ENCODE measurements at regions of chr5 and their contacts with region 1.

Region 1: GRCh38 chr5:132456296-132457001 is 34.1 kb downstream of the IRF1 start:
- DNase-seq: peak; percentile 76 to 87 (median 79)
- H3K4me3 ChIP-seq: peak overlapping the region; percentile 41 to 48
- H3K4me3 Mint-ChIP-seq: peak overlapping the region; percentile 73 to 89 (median 82)
- H3K27ac ChIP-seq: peak overlapping the region; percentile 77
- H3K27ac Mint-ChIP-seq: peak overlapping the region; percentile 97 to 100 (median 100)
- H3K4me1 ChIP-seq: peaks cover 100% of the 10 kb centered on the region
- H3K4me1 Mint-ChIP-seq: peaks cover 82 to 95% (median 90%) of the 10 kb centered on the region in 4 donors
- H3K27me3 ChIP-seq: no peaks in the 10 kb centered on the region
- H3K27me3 Mint-ChIP-seq: no peaks in the 10 kb centered on the region

Region 2: DNA sequence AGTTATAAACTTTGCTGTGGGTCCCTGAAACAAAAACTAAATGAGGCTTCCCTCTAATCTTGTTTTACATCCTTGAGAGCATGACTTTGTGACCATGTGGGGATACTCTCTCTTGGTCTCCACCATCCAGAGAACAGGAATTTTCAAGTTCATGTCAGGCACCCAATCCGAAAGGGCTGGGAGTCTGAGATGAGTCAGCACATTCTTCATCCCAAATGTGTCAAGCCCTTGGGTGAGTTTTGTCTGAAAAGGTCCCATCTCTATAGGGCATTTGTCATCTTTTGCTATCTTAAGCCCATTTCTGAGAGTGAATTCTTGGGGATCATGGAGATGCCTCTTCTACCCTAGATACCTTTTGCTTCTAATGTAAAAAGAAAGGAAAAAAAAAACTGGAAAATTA is 794.5 kb before region 1 on chr5:
- CTCF ChIA-PET with region 1: no interaction called
- POLR2A ChIA-PET with region 1: no interaction called
- intact Hi-C with region 1: no loop called
- DNase-seq: no peak
- H3K4me3 ChIP-seq: no peak overlapping the region
- H3K4me3 Mint-ChIP-seq: no peak overlapping the region
- H3K27ac ChIP-seq: no peak overlapping the region
- H3K27ac Mint-ChIP-seq: no peak overlapping the region
- H3K4me1 ChIP-seq: no peaks in the 10 kb centered on the region
- H3K4me1 Mint-ChIP-seq: peaks cover 0 to 8% (median 0%) of the 10 kb centered on the region in 4 donors
- H3K27me3 ChIP-seq: no peaks in the 10 kb centered on the region
- H3K27me3 Mint-ChIP-seq: no peaks in the 10 kb centered on the region

Region 3: GRCh38 chr5:132419502-132420468 is 36.7 kb before region 1 on chr5:
- CTCF ChIA-PET with region 1: interaction called, 100 read pairs
- POLR2A ChIA-PET with region 1: interaction called, 378 read pairs
- intact Hi-C with region 1: loop called (anchors 5 kb)
- DNase-seq: peak; percentile 57 to 69 (median 64)
- H3K4me3 ChIP-seq: peak overlapping the region; percentile 38 to 51
- H3K4me3 Mint-ChIP-seq: peak overlapping the region; percentile 75 to 93 (median 80)
- H3K27ac ChIP-seq: peak overlapping the region; percentile 71
- H3K27ac Mint-ChIP-seq: peak overlapping the region; percentile 96 to 99 (median 97)
- H3K4me1 ChIP-seq: peaks cover 100% of the 10 kb centered on the region
- H3K4me1 Mint-ChIP-seq: peaks cover 76 to 98% (median 86%) of the 10 kb centered on the region in 4 donors
- H3K27me3 ChIP-seq: no peaks in the 10 kb centered on the region
- H3K27me3 Mint-ChIP-seq: no peaks in the 10 kb centered on the region

Region 4: GRCh38 chr5:132426525-132427138 is 29.8 kb before region 1 on chr5:
- CTCF ChIA-PET with region 1: interaction called, 100 read pairs
- POLR2A ChIA-PET with region 1: interaction called, 378 read pairs
- intact Hi-C with region 1: loop called (anchors 1 kb)
- DNase-seq: peak; percentile 37 to 83 (median 44)
- H3K4me3 ChIP-seq: peak overlapping the region; percentile 10 to 28
- H3K4me3 Mint-ChIP-seq: peak overlapping the region; percentile 67 to 83 (median 76)
- H3K27ac ChIP-seq: peak overlapping the region; percentile 77
- H3K27ac Mint-ChIP-seq: peak overlapping the region; percentile 96 to 99 (median 98)
- H3K4me1 ChIP-seq: peaks cover 100% of the 10 kb centered on the region
- H3K4me1 Mint-ChIP-seq: peaks cover 80 to 98% (median 94%) of the 10 kb centered on the region in 4 donors
- H3K27me3 ChIP-seq: no peaks in the 10 kb centered on the region
- H3K27me3 Mint-ChIP-seq: no peaks in the 10 kb centered on the region

Region 5: GRCh38 chr5:132437604-132438266 is 18.7 kb before region 1 on chr5:
- CTCF ChIA-PET with region 1: interaction called, 17 read pairs
- POLR2A ChIA-PET with region 1: interaction called, 378 read pairs
- intact Hi-C with region 1: loop called (anchors 1 kb)
- DNase-seq: peak; percentile 49 to 75 (median 52)
- H3K4me3 ChIP-seq: peak overlapping the region; percentile 4 to 8
- H3K4me3 Mint-ChIP-seq: peak overlapping the region; percentile 52 to 85 (median 70)
- H3K27ac ChIP-seq: peak overlapping the region; percentile 60
- H3K27ac Mint-ChIP-seq: peak overlapping the region; percentile 89 to 96 (median 92)
- H3K4me1 ChIP-seq: peaks cover 99% of the 10 kb centered on the region
- H3K4me1 Mint-ChIP-seq: peaks cover 64 to 97% (median 83%) of the 10 kb centered on the region in 4 donors
- H3K27me3 ChIP-seq: no peaks in the 10 kb centered on the region
- H3K27me3 Mint-ChIP-seq: no peaks in the 10 kb centered on the region

Region 6: DNA sequence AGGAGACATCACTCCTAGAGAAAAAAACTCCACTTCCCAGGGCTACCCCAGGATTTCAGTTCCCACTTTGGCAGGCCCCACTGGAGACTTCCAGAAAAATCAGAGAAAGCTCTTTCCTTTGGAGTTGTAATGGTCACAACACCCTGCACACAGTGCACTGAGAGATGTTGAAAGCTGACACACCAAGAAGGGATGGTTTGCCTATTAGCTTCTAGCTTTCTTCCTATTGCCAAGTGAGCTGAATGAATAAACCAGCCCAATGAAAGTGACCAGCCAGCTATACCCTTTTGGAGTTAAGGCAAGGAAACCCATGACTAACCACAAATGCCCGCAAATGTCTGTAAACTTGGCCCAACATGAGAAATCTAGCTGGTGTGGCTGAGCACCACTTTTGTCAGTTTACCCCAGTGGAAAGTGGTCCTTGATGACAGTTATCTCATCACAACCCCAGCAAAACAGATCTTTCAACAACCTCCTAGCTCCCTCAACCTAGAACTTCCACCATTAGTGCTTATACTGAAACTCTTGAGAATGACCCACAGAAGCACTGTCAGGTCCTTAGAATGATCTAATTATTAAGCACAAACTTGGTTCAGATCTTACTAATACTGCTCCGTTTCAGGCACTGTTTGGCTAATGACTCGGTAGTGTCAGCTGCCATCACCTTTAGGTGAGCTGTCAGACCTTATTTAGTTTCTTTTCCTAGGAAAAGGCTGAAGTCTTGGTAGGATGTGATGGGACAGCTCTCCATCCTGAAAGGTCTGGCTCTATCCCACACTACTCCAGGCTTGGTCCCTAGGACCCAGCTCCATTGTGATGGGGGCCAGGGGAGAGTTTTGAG is 22.9 kb after region 1 on chr5:
- CTCF ChIA-PET with region 1: interaction called, 20 read pairs
- POLR2A ChIA-PET with region 1: interaction called, 1,580 read pairs
- intact Hi-C with region 1: no loop called
- DNase-seq: peak in 4 of 5 donors; percentile 24 to 39 (median 30)
- H3K4me3 ChIP-seq: no peak overlapping the region
- H3K4me3 Mint-ChIP-seq: peak overlapping the region in 2 of 8 donors; percentile 30 to 44
- H3K27ac ChIP-seq: peak overlapping the region; percentile 37
- H3K27ac Mint-ChIP-seq: peak overlapping the region; percentile 82 to 97 (median 90)
- H3K4me1 ChIP-seq: peaks cover 92% of the 10 kb centered on the region
- H3K4me1 Mint-ChIP-seq: peaks cover 39 to 94% (median 69%) of the 10 kb centered on the region in 4 donors
- H3K27me3 ChIP-seq: no peaks in the 10 kb centered on the region
- H3K27me3 Mint-ChIP-seq: no peaks in the 10 kb centered on the region

Measured in CD4-positive, alpha-beta memory T cell (primary cell).